Activated T-helper 2 cell treated with anti-CD3 and anti-CD28 coated beads, Interferon-gamma antibody, Interleukin-2, Interleukin-4, amounts not matched to agents 10 μg/mL and 5 μg/mL and 100 μg/mL, durations not matched to agents 14 hours and 24 hours and 36 hours (primary cell): ENCODE measurements at regions of chr12 and their contacts with region 1.

Region 1: DNA sequence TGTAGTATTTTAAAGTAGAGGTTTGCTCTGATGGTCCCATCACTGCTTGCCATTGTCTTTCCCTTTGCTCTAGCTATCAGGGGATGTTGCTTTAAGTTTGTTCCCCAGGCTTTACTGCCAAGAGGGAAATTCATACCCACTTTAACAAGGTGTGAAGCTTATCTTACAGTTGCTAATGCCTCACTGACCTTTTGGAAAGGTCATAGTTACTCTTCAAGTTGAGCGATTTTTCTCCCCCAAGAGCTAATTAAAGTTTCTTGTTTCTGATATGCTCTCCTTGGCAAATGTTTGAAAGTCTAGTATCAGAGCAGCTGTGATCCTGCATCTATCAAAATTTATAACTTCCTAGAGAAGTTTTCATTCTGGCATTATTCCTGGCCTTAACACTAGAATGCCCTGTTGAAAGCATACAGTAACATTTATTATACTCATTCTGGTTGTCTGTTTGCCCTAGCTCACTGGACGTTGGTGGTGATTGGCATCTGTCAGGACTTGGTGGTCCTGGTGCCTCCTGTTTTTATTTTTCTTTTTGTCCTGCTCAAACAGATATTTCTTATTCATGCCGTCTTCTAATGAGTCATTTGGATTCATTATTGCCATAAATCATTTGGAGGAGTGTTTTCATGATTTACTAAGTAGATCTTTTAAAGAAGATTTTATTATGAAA is 8.1 kb downstream of the ATP2A2 start:
- DNase-seq: no peak
- H3K4me3 Mint-ChIP-seq: no peak overlapping the region
- H3K27ac Mint-ChIP-seq: peak overlapping the region; percentile 42
- H3K4me1 Mint-ChIP-seq: peaks cover 42% of the 10 kb centered on the region
- H3K27me3 Mint-ChIP-seq: no peaks in the 10 kb centered on the region

Region 2: GRCh38 chr12:110307372-110307771 is 18.2 kb after region 1 on chr12:
- intact Hi-C with region 1: loop called (anchors 2 kb)
- DNase-seq: no peak
- H3K4me3 Mint-ChIP-seq: no peak overlapping the region
- H3K27ac Mint-ChIP-seq: peak overlapping the region; percentile 73
- H3K4me1 Mint-ChIP-seq: peaks cover 47% of the 10 kb centered on the region
- H3K27me3 Mint-ChIP-seq: no peaks in the 10 kb centered on the region